ENCODE measurements at regions of chr7 and their contacts with region 1.

Region 1: DNA sequence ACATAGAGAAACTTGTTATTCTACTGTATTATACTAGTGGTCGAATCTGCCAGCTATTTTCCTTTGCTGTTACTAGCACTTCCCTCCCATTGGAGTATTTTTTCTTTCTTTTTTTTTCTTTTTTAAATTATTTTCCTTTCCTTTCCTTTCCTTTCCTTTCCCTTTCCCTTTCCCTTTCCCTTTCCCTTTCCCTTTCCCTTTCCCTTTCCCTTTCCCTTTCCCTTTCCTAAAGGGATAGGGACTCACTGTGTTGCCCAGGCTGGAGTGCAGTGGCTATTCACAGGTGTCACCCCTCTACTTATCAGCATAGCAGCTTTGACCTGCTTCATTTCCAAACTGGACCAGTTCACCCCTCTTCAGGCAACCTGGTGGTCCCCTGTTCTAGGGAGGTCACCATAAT is 212.6 kb upstream of the SP4 start:
- DNase-seq: no peak
- ATAC-seq: no peak
- H3K4me3 Mint-ChIP-seq: no peak overlapping the region
- H3K27ac Mint-ChIP-seq: no peak overlapping the region
- H3K4me1 Mint-ChIP-seq: peaks cover 5% of the 10 kb centered on the region
- H3K27me3 Mint-ChIP-seq: no peaks in the 10 kb centered on the region
- CTCF ChIP-seq: no peak

Region 2: DNA sequence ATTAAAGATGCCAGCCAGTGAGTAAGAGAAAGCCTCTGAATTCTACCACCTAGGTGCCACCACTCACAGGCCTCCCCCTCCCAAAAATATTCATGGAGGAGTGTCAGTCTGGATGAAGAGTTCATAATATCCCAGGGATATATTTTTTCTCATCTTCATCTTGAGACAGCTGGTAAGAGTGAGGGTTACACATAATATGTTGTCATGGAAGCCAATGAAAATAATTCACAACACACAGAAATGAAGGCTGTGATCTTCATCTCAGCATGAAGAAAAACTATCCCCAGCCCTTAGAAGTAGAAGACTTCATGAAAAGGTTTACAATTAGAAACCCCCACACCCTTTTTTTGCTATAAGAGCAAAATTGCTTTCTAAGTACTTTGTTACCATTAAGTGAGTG is 503.1 kb after region 1 on chr7:
- CTCF ChIA-PET with region 1: no interaction called
- POLR2A ChIA-PET with region 1: interaction called, 13 read pairs
- DNase-seq: no peak
- ATAC-seq: no peak
- H3K4me3 Mint-ChIP-seq: no peak overlapping the region
- H3K27ac Mint-ChIP-seq: no peak overlapping the region
- H3K4me1 Mint-ChIP-seq: peaks cover 18% of the 10 kb centered on the region
- H3K27me3 Mint-ChIP-seq: no peaks in the 10 kb centered on the region
- CTCF ChIP-seq: no peak

Measured in WTC11 (cell line).